Activated CD4-positive, alpha-beta T cell treated with anti-CD3 and anti-CD28 coated beads for 36 hours (primary cell): ENCODE measurements at regions of chr2 and their contacts with region 1.

Region 1: DNA sequence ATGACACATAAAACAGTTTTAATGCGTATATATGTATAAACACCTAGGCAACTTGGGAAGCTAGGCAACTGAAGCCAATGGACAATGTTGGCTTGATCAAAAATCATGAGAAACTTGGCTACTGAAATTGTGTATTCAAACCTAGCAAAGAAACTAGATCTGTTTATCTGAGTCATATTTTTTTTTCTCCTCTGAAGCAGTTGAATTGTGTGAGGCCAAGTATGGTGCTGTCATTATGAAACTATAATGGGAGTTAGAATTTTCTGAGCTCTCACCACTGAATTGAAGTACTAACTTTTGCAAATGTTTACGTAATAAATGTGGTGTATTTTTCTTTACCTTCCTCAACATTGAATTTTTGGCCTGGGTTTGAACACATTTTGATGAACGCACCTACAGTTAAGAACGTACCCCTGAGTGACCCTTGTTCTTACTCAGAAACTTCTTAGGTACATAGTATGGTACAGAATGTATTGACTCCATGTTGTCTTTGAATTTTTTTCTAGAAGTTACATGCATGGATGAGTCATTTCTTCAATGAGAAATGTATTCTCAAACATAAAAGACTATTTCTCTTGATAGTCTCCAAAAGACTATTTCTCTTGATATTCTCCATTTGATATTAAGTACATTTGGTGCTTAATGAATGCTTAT is 23.8 kb downstream of the CD28 start:
- DNase-seq: no peak
- ATAC-seq: peak; percentile 50
- H3K4me3 Mint-ChIP-seq: peak overlapping the region; percentile 46
- H3K27ac Mint-ChIP-seq: peak overlapping the region; percentile 99
- H3K4me1 Mint-ChIP-seq: peaks cover 93% of the 10 kb centered on the region
- H3K27me3 Mint-ChIP-seq: no peaks in the 10 kb centered on the region

Region 2: DNA sequence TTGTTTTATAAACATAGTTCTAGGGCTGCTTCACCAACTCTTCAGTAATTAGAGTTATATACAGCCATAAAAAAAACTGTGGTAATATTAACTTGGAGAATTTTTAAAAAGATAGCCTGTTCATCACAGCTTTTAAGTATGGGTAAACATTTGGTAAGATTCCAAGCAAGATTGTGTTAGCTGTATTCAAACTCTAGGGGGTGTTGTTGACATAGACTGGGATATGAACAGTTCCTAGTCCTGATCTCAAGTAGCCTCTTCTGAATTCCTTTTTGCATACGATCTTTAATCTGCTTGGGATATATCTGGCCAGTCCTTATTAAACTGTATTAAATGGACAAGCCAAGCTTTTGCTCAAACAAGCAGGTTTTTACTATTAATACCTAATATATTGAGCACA is 1451.3 kb before region 1 on chr2:
- CTCF ChIA-PET with region 1: interaction called, 3 read pairs
- POLR2A ChIA-PET with region 1: no interaction called
- intact Hi-C with region 1: loop called in 1 of 2 experiments (anchors 5 kb)
- DNase-seq: no peak
- ATAC-seq: no peak
- H3K4me3 Mint-ChIP-seq: no peak overlapping the region
- H3K27ac Mint-ChIP-seq: peak overlapping the region; percentile 84
- H3K4me1 Mint-ChIP-seq: peaks cover 46% of the 10 kb centered on the region
- H3K27me3 Mint-ChIP-seq: no peaks in the 10 kb centered on the region

Region 3: GRCh38 chr2:202790676-202791075 is 939.5 kb before region 1 on chr2:
- CTCF ChIA-PET with region 1: no interaction called
- POLR2A ChIA-PET with region 1: no interaction called
- intact Hi-C with region 1: no loop called
- DNase-seq: no peak
- ATAC-seq: no peak
- H3K4me3 Mint-ChIP-seq: no peak overlapping the region
- H3K27ac Mint-ChIP-seq: no peak overlapping the region
- H3K4me1 Mint-ChIP-seq: no peaks in the 10 kb centered on the region
- H3K27me3 Mint-ChIP-seq: no peaks in the 10 kb centered on the region

Region 4: GRCh38 chr2:203605302-203605701 is 124.9 kb before region 1 on chr2:
- CTCF ChIA-PET with region 1: no interaction called
- POLR2A ChIA-PET with region 1: no interaction called
- intact Hi-C with region 1: no loop called
- DNase-seq: no peak
- ATAC-seq: no peak
- H3K4me3 Mint-ChIP-seq: no peak overlapping the region
- H3K27ac Mint-ChIP-seq: no peak overlapping the region
- H3K4me1 Mint-ChIP-seq: no peaks in the 10 kb centered on the region
- H3K27me3 Mint-ChIP-seq: no peaks in the 10 kb centered on the region

Region 5: GRCh38 chr2:203740780-203741281 is 10.6 kb after region 1 on chr2:
- CTCF ChIA-PET with region 1: interaction called, 27 read pairs
- POLR2A ChIA-PET with region 1: interaction called, 44 read pairs
- intact Hi-C with region 1: loop called (anchors 1 kb)
- DNase-seq: peak; percentile 52
- ATAC-seq: peak; percentile 70
- H3K4me3 Mint-ChIP-seq: peak overlapping the region; percentile 62
- H3K27ac Mint-ChIP-seq: peak overlapping the region; percentile 99
- H3K4me1 Mint-ChIP-seq: peaks cover 92% of the 10 kb centered on the region
- H3K27me3 Mint-ChIP-seq: no peaks in the 10 kb centered on the region

Region 6: GRCh38 chr2:203782262-203782976 is 52.2 kb after region 1 on chr2:
- CTCF ChIA-PET with region 1: interaction called, 3 read pairs
- POLR2A ChIA-PET with region 1: interaction called, 12 read pairs
- intact Hi-C with region 1: no loop called
- DNase-seq: peak; percentile 81
- ATAC-seq: peak; percentile 94
- H3K4me3 Mint-ChIP-seq: no peak overlapping the region
- H3K27ac Mint-ChIP-seq: peak overlapping the region; percentile 89
- H3K4me1 Mint-ChIP-seq: peaks cover 52% of the 10 kb centered on the region
- H3K27me3 Mint-ChIP-seq: no peaks in the 10 kb centered on the region

Region 7: DNA sequence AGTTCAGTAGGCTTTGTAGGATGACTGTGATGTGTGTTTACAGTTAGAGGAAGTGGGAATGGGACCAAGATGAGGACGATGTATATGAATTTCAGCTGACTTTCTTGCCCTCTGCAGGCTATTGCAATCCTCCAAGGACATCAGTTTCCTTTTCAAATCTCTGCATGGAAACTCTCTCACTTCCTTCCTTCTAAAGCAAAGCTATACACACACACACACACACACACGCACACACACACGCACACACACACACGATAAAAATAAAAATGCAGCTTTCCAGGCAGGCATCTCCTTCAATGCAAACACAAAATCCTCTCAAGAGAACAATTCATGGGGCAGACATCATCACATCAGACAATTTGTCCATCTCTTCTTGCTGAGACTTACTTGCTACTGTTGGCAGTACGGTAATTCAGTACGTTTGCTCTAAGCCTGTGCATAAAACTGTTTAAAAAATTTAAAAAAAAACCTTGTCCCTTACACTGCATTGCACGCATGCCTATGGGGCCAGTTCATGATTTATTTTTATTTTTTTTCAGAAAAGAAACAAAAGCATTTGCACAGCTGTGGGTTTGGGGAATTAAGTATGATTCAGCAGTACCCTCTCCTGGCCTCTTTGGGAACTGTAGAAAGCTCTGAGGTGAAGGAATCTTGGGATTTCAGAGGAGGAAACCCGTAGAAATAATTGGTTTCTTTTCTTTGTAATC is 179.2 kb after region 1 on chr2:
- CTCF ChIA-PET with region 1: interaction called, 5 read pairs
- POLR2A ChIA-PET with region 1: no interaction called
- intact Hi-C with region 1: loop called in 1 of 2 experiments (anchors 1 kb)
- DNase-seq: peak; percentile 44
- ATAC-seq: peak; percentile 72
- H3K4me3 Mint-ChIP-seq: peak overlapping the region; percentile 0
- H3K27ac Mint-ChIP-seq: peak overlapping the region; percentile 44
- H3K4me1 Mint-ChIP-seq: peaks cover 30% of the 10 kb centered on the region
- H3K27me3 Mint-ChIP-seq: peaks cover 2% of the 10 kb centered on the region

Region 8: GRCh38 chr2:203997980-203998809 is 268.0 kb after region 1 on chr2:
- CTCF ChIA-PET with region 1: no interaction called
- POLR2A ChIA-PET with region 1: no interaction called
- intact Hi-C with region 1: loop called (anchors 5 kb)
- DNase-seq: no peak
- ATAC-seq: peak; percentile 73
- H3K4me3 Mint-ChIP-seq: peak overlapping the region; percentile 32
- H3K27ac Mint-ChIP-seq: peak overlapping the region; percentile 86
- H3K4me1 Mint-ChIP-seq: peaks cover 67% of the 10 kb centered on the region
- H3K27me3 Mint-ChIP-seq: no peaks in the 10 kb centered on the region